Activated CD4-positive, alpha-beta T cell treated with anti-CD3 and anti-CD28 coated beads, Interleukin-2, amount 10 ng/mL, durations not matched to agents 24 days and 14 days (primary cell): ENCODE measurements at regions of chr14 and their contacts with region 1.

Region 1: DNA sequence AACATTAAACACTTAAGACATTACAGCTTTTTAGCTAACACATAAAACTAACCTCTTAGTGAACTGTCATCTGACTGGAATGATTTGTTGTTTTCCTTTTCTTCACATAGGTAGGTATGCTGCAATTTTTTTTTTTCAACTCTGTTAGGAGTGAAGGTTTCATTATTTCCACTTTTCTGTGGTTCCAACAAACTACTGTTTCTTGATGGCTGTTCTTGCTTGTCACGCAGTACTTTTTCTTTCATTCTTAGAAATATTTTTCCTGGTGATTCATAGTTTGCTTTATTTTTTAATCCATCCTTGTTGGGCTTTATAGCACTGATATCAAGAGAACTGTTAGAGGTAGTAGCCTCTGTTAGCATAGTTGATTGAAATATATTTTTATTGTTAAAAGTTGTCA is 6.3 kb downstream of the MIS18BP1 start:
- DNase-seq: peak; percentile 50
- H3K4me3 Mint-ChIP-seq: no peak overlapping the region
- H3K27ac Mint-ChIP-seq: no peak overlapping the region
- H3K4me1 Mint-ChIP-seq: peaks cover 19% of the 10 kb centered on the region
- H3K27me3 Mint-ChIP-seq: no peaks in the 10 kb centered on the region

Region 2: GRCh38 chr14:45114327-45114726 is 132.4 kb before region 1 on chr14:
- intact Hi-C with region 1: loop called (anchors 1 kb)
- DNase-seq: no peak
- H3K4me3 Mint-ChIP-seq: no peak overlapping the region
- H3K27ac Mint-ChIP-seq: peak overlapping the region; percentile 72
- H3K4me1 Mint-ChIP-seq: peaks cover 10% of the 10 kb centered on the region
- H3K27me3 Mint-ChIP-seq: no peaks in the 10 kb centered on the region

Region 3: GRCh38 chr14:45222485-45223262 is 24.0 kb before region 1 on chr14:
- intact Hi-C with region 1: loop called (anchors 2 kb)
- DNase-seq: peak; percentile 62
- H3K4me3 Mint-ChIP-seq: peak overlapping the region; percentile 6
- H3K27ac Mint-ChIP-seq: peak overlapping the region; percentile 78
- H3K4me1 Mint-ChIP-seq: peaks cover 29% of the 10 kb centered on the region
- H3K27me3 Mint-ChIP-seq: no peaks in the 10 kb centered on the region

Region 4: GRCh38 chr14:45267071-45267470 is 20.4 kb after region 1 on chr14:
- intact Hi-C with region 1: no loop called
- DNase-seq: no peak
- H3K4me3 Mint-ChIP-seq: no peak overlapping the region
- H3K27ac Mint-ChIP-seq: no peak overlapping the region
- H3K4me1 Mint-ChIP-seq: peaks cover 5% of the 10 kb centered on the region
- H3K27me3 Mint-ChIP-seq: peaks cover 15% of the 10 kb centered on the region

Region 5: GRCh38 chr14:45284802-45285201 is 38.1 kb after region 1 on chr14:
- intact Hi-C with region 1: no loop called
- DNase-seq: no peak
- H3K4me3 Mint-ChIP-seq: no peak overlapping the region
- H3K27ac Mint-ChIP-seq: no peak overlapping the region
- H3K4me1 Mint-ChIP-seq: no peaks in the 10 kb centered on the region
- H3K27me3 Mint-ChIP-seq: no peaks in the 10 kb centered on the region